GM13976 (cell line): ENCODE measurements at regions of chr10 and their contacts with region 1.

Region 1: DNA sequence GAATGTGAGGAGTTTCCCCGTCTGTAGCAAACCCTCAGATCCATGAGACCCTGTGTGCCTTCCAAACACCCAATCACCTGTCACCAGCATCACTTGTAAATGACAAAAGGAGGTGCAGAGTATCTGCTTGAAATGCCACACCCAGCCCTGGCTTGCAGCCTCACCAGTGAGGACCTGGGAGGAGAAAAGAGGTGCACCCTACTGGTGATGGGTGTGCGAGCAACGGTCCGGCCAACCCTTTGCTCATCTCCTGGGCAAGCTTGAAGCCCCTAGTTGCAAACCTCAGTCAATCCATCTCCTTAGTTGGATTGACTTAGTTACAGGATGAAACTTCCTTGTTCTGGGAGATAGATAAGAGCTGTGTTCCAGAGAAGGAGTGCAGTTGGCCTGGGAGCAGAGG is 62.4 kb upstream of the WAPL start:
- DNase-seq: peak; percentile 70
- CTCF ChIP-seq: peak; percentile 42

Region 2: GRCh38 chr10:86399879-86400704 is 183.9 kb before region 1 on chr10:
- in situ Hi-C with region 1: loop called (anchors 5 kb)
- DNase-seq: peak; percentile 93
- CTCF ChIP-seq: peak; percentile 86

Region 3: DNA sequence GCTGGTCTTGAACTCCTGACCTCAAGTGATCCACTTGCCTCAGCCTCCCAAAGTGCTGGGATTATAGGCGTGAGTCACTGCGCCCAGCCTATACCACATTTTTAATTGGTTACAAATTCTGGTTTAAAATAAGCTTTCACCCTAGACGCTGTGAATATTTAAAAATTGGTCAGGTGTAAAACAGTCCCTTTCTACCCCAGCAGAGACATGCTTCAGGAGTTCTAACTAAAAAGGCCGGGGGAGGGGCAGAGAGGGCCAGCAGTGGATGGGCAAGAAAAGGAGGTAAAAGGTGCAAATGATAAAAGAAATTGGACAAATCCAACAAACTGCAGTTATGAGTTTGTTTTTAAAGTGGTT is 132.4 kb before region 1 on chr10:
- in situ Hi-C with region 1: no loop called
- DNase-seq: no peak
- CTCF ChIP-seq: no peak